Posterior cingulate gyrus (tissue), 11 donors: ENCODE measurements at regions of chr13 and their contacts with region 1.

Region 1: GRCh38 chr13:110705826-110706569 is at the start of gene CARS2:
- DNase-seq: peak; percentile 78 to 98 (median 89)

Region 2: GRCh38 chr13:110615322-110616102 is 90.5 kb before region 1 on chr13 and contains the start of gene NAXD:
- intact Hi-C with region 1: loop called (anchors 5 kb)
- DNase-seq: peak; percentile 90 to 99 (median 96)

Region 3: DNA sequence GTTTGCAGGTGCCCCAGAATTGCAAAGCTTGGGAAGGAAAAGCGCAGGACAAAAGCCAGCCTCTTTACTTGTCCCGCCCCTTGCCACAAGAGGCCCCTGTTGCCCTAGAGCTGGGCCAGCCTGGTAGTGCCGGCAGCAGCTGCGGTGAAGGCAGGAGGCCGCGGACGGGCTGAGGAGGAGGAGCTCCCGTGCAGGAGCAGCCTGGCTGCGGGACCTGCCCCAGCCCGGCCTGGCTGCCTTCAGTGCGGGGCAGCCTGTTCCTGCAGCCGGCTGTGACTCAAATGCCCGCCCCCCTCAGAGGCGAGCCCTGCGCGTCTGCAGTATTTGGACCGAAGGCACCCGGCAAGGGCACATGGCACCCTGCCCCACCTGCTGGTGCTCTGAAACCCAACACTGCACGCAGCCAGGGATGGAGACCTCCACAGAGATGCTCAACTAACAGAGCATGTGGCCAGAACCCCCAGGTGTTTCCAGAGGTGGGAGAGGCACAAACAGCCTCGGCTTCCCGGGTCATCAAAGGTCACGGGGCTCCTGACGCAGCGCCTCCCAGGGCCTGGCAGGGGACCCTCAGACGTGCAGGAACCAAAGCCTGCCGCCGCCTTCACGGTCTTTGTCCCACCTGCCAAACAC is 61.0 kb before region 1 on chr13:
- intact Hi-C with region 1: loop called (anchors 10 kb)
- DNase-seq: peak; percentile 60 to 97 (median 73)

Region 4: GRCh38 chr13:112097770-112098169 is 1391.8 kb after region 1 on chr13:
- intact Hi-C with region 1: no loop called
- DNase-seq: no peak